GM10248 (cell line): ENCODE measurements at regions of chr1 and their contacts with region 1.

Region 1: GRCh38 chr1:165914136-165914798 is 86.9 kb downstream of the UCK2 start:
- DNase-seq: peak; percentile 78
- CTCF ChIP-seq: peak; percentile 80

Region 2: GRCh38 chr1:165697881-165698760 is 216.1 kb before region 1 on chr1 and contains the start of gene ALDH9A1:
- CTCF ChIA-PET with region 1: interaction called, 19 read pairs
- POLR2A ChIA-PET with region 1: no interaction called
- DNase-seq: peak; percentile 90
- CTCF ChIP-seq: peak; percentile 48

Region 3: GRCh38 chr1:165717918-165718515 is 196.2 kb before region 1 on chr1:
- CTCF ChIA-PET with region 1: interaction called, 37 read pairs
- POLR2A ChIA-PET with region 1: no interaction called
- DNase-seq: peak; percentile 57
- CTCF ChIP-seq: peak; percentile 89

Region 4: GRCh38 chr1:165884690-165885304 is 29.5 kb before region 1 on chr1:
- CTCF ChIA-PET with region 1: interaction called, 26 read pairs
- POLR2A ChIA-PET with region 1: no interaction called
- DNase-seq: no peak
- CTCF ChIP-seq: no peak

Region 5: GRCh38 chr1:165903672-165904071 is 10.6 kb before region 1 on chr1:
- CTCF ChIA-PET with region 1: interaction called, 52 read pairs
- POLR2A ChIA-PET with region 1: no interaction called
- DNase-seq: no peak
- CTCF ChIP-seq: no peak

Region 6: DNA sequence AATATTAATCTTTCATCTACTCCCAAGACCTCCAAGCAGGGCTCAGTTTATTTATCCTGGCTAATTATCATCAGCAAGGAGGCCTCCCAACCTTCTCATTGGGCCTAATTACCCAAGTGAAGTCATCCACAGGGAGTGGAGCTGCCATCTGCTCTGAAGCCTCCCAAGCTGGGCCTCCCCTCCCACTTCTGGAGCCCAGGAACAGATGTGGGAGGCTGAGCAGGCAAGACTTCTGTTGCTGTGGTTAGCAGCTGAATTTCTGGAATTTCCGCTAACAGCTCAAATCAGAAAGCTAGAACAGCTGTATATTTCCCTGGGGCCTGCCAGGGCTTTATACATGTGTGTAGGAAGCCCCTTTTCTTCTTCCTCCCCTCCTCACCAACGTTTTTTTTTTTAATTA is 40.7 kb after region 1 on chr1:
- CTCF ChIA-PET with region 1: no interaction called
- POLR2A ChIA-PET with region 1: no interaction called
- DNase-seq: no peak
- CTCF ChIP-seq: no peak